Activated CD4-positive, alpha-beta T cell treated with anti-CD3 and anti-CD28 coated beads for 36 hours (primary cell): ENCODE measurements at regions of chr7 and their contacts with region 1.

Region 1: DNA sequence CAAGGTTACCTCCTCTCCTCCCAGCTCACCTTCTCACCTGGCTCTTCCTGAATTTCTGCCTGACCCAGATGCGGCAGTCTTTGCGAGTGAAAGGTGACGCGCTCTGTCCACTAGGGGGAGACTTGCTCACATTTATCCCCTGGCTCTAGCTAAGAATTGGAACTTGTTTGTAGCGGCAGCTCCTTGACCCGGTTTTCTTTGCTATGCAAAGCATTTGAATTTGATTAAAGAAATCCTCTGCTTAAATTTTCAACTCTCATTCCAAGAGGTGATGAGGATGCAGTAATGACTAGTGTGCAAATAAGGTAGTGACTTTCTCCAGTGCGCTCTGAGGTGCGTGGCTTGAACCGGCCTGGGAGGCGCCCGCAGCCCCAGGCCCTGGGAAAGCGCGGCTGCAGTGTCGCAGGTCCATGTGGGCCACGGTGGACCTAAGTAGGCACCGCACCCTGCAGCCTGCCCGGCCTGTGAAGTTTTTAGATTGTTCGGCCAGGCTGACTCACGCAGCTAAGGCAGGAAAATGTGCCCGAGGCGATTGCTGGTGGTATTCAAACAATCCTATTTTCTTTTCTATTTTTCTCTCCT is 336.9 kb upstream of the NPSR1 start:
- DNase-seq: peak; percentile 67
- ATAC-seq: peak; percentile 64
- H3K4me3 Mint-ChIP-seq: no peak overlapping the region
- H3K27ac Mint-ChIP-seq: no peak overlapping the region
- H3K4me1 Mint-ChIP-seq: peaks cover 7% of the 10 kb centered on the region
- H3K27me3 Mint-ChIP-seq: peaks cover 21% of the 10 kb centered on the region

Region 2: GRCh38 chr7:34177476-34177875 is 143.6 kb before region 1 on chr7:
- CTCF ChIA-PET with region 1: no interaction called
- POLR2A ChIA-PET with region 1: no interaction called
- intact Hi-C with region 1: no loop called
- DNase-seq: no peak
- ATAC-seq: no peak
- H3K4me3 Mint-ChIP-seq: no peak overlapping the region
- H3K27ac Mint-ChIP-seq: no peak overlapping the region
- H3K4me1 Mint-ChIP-seq: no peaks in the 10 kb centered on the region
- H3K27me3 Mint-ChIP-seq: no peaks in the 10 kb centered on the region

Region 3: GRCh38 chr7:34227525-34227924 is 93.6 kb before region 1 on chr7:
- CTCF ChIA-PET with region 1: no interaction called
- POLR2A ChIA-PET with region 1: no interaction called
- intact Hi-C with region 1: no loop called
- DNase-seq: no peak
- ATAC-seq: no peak
- H3K4me3 Mint-ChIP-seq: no peak overlapping the region
- H3K27ac Mint-ChIP-seq: no peak overlapping the region
- H3K4me1 Mint-ChIP-seq: no peaks in the 10 kb centered on the region
- H3K27me3 Mint-ChIP-seq: no peaks in the 10 kb centered on the region

Region 4: GRCh38 chr7:34425187-34425586 is 104.1 kb after region 1 on chr7:
- CTCF ChIA-PET with region 1: no interaction called
- POLR2A ChIA-PET with region 1: no interaction called
- intact Hi-C with region 1: loop called in 1 of 2 experiments (anchors 5 kb)
- DNase-seq: no peak
- ATAC-seq: no peak
- H3K4me3 Mint-ChIP-seq: no peak overlapping the region
- H3K27ac Mint-ChIP-seq: no peak overlapping the region
- H3K4me1 Mint-ChIP-seq: no peaks in the 10 kb centered on the region
- H3K27me3 Mint-ChIP-seq: no peaks in the 10 kb centered on the region

Region 5: DNA sequence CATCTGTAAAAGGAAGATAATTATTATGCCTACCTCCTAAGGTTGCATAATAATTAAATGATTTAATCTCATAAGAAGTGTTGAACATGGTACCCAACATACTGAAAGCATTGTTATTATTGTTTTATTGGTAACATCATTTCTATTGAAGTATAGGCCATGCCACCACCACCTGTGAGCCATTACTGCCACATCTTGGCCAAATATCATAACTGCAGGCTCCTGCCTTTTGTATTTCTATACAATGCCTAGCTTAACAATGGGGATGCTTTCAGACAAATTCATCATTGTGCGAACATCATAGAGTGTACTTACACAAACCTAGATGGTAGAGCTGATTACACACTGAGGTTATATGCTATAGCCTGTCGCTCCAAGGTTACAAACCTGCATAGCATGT is 275.8 kb after region 1 on chr7:
- CTCF ChIA-PET with region 1: interaction called, 3 read pairs
- POLR2A ChIA-PET with region 1: no interaction called
- intact Hi-C with region 1: loop called in 1 of 2 experiments (anchors 1 kb)
- DNase-seq: peak; percentile 7
- ATAC-seq: no peak
- H3K4me3 Mint-ChIP-seq: no peak overlapping the region
- H3K27ac Mint-ChIP-seq: no peak overlapping the region
- H3K4me1 Mint-ChIP-seq: no peaks in the 10 kb centered on the region
- H3K27me3 Mint-ChIP-seq: no peaks in the 10 kb centered on the region

Region 6: DNA sequence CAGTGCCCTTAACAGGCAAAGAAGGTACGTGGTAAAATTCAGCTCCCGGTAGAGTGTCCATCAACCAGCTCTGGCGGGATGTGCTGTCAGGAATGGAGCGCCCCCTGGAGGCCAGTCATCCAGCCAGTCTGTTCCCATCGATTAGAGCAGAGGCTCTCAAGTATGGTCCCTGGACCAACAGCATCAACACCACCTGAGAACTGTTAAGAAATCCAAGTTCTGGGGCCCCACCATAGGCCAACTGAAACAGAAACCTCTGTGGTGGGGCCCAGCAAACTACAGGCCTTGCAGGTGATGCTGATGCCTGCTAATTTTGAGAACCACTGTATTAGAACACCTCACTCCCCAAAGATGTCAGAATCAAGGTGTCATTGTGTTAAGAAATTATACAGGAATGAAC is 607.0 kb after region 1 on chr7:
- CTCF ChIA-PET with region 1: no interaction called
- POLR2A ChIA-PET with region 1: no interaction called
- intact Hi-C with region 1: loop called in 1 of 2 experiments (anchors 5 kb)
- DNase-seq: peak; percentile 79
- ATAC-seq: peak; percentile 36
- H3K4me3 Mint-ChIP-seq: no peak overlapping the region
- H3K27ac Mint-ChIP-seq: no peak overlapping the region
- H3K4me1 Mint-ChIP-seq: no peaks in the 10 kb centered on the region
- H3K27me3 Mint-ChIP-seq: peaks cover 5% of the 10 kb centered on the region